ENCODE measurements at regions of chr2 and their contacts with region 1.

Region 1: DNA sequence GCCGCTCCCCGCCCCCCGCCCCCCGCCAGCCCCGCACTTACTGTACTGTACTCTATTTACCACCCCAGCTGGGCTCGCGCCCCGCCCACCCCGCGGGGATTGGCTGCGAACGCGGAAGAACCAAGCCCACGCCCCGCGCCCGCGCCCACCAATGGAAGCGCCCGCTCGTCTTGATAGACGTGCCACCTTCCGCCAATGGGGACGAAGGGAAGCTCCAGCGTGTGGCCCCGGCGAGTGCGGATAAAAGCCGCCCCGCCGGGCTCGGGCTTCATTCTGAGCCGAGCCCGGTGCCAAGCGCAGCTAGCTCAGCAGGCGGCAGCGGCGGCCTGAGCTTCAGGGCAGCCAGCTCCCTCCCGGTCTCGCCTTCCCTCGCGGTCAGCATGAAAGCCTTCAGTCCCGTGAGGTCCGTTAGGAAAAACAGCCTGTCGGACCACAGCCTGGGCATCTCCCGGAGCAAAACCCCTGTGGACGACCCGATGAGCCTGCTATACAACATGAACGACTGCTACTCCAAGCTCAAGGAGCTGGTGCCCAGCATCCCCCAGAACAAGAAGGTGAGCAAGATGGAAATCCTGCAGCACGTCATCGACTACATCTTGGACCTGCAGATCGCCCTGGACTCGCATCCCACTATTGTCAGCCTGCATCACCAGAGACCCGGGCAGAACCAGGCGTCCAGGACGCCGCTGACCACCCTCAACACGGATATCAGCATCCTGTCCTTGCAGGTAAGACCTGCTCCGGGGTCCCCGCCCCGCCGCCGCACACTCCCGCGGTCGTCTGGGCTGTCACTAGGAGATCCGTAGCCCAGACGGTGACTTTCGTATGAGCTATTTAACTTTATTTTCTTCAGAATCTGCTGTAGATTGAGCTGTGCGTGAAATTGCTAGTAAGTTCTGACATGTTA is at the start of gene ID2:
- DNase-seq: peak; percentile 99
- H3K4me3 Mint-ChIP-seq: peak within 1 kb of the TSS; percentile 98
- H3K27ac Mint-ChIP-seq: peak within 1 kb of the TSS; percentile 99
- H3K4me1 Mint-ChIP-seq: peaks cover 33% of the 10 kb centered on the region
- H3K27me3 Mint-ChIP-seq: no peaks in the 10 kb centered on the region
- CTCF ChIP-seq: no peak
- total RNA-seq, gene ID2: 77.8 and 92.5 TPM in 2 replicates

Region 2: GRCh38 chr2:7203055-7203467 is 1479.0 kb before region 1 on chr2:
- CTCF ChIA-PET with region 1: no interaction called
- intact Hi-C with region 1: loop called (anchors 5 kb)
- DNase-seq: peak; percentile 61
- H3K4me3 Mint-ChIP-seq: no peak overlapping the region
- H3K27ac Mint-ChIP-seq: no peak overlapping the region
- H3K4me1 Mint-ChIP-seq: no peaks in the 10 kb centered on the region
- H3K27me3 Mint-ChIP-seq: peaks cover 10% of the 10 kb centered on the region
- CTCF ChIP-seq: peak; percentile 58

Region 3: DNA sequence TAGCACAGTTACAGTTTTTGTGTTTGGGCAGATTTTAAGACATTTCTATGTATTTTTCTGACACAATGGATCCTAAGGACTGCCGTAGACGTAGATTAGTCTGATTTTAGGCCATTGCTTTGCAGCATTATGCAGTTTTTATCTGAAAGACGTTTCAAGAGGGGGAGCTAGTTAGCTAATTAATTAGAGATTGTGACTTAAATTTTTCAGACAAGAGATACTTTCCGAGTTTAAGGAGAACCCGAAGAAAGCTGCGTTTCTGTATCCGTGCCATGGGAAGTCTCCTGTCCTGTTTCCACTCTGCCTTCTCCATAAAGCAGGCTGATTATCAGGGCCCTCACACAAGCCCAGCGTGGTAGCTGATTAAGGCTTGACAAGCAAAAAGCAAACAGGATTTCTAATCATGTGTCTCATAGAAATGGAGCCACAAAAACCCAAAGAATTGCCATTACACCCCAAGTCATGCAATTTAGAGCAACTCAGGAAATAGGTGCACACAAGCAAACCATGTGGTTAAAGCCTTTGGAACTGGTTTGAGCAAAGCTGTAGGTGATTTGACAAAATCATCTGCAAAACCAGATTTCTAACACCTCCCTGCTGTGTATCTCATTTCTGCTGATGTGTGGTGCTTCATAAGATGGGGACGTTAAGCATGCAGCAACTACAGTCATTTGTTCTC is 956.7 kb before region 1 on chr2:
- CTCF ChIA-PET with region 1: no interaction called
- intact Hi-C with region 1: loop called (anchors 5 kb)
- DNase-seq: no peak
- H3K4me3 Mint-ChIP-seq: no peak overlapping the region
- H3K27ac Mint-ChIP-seq: peak overlapping the region; percentile 1
- H3K4me1 Mint-ChIP-seq: peaks cover 13% of the 10 kb centered on the region
- H3K27me3 Mint-ChIP-seq: no peaks in the 10 kb centered on the region
- CTCF ChIP-seq: no peak

Region 4: GRCh38 chr2:8103083-8103708 is 578.8 kb before region 1 on chr2:
- CTCF ChIA-PET with region 1: no interaction called
- intact Hi-C with region 1: loop called (anchors 2 kb)
- DNase-seq: peak; percentile 31
- H3K4me3 Mint-ChIP-seq: no peak overlapping the region
- H3K27ac Mint-ChIP-seq: no peak overlapping the region
- H3K4me1 Mint-ChIP-seq: peaks cover 50% of the 10 kb centered on the region
- H3K27me3 Mint-ChIP-seq: no peaks in the 10 kb centered on the region
- CTCF ChIP-seq: no peak

Region 5: DNA sequence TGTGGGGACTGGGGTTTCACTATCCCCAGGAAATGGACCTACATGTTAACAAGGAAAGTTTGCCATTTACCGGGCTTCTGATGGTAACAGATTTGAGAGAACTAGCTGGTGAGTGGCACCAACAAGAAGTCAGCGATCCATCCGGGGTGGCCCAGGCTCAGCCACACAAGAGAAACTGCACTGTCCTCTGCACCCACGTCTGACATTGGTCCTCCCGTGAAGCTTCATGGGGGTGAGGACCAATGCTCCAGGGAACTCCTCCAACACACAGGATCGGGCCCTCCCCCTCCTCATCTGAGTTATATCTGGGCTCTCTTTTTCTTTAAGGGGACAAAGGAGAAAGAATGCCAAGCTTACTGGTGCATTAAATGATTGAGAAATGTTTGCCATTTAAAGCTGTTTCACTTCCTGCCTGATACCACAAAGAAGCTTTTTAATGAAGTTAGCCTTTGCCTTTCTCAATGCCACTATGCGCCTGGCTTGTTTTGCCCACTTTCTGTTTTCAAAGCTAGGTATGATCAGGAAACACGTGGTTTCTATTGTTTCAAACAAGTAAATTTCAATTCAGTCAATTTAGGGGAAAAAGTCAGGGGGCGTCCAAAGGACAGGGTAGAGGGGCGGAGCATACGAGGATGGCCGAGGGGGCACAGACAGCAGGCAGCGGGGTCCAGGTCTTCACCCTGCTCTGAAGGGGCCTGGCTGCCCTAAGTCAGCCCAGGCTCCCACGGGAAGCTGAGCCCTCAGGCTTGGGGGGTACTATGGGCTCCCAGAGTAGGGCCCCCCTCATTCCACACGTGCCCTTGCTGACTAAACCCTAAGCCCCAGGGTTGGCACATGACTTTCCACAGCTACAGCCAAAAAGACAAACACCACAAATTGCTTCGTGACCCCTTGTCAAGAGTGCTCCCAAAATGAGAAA is 204.2 kb before region 1 on chr2:
- CTCF ChIA-PET with region 1: no interaction called
- intact Hi-C with region 1: loop called (anchors 5 kb)
- DNase-seq: no peak
- H3K4me3 Mint-ChIP-seq: no peak overlapping the region
- H3K27ac Mint-ChIP-seq: peak overlapping the region; percentile 86
- H3K4me1 Mint-ChIP-seq: peaks cover 77% of the 10 kb centered on the region
- H3K27me3 Mint-ChIP-seq: no peaks in the 10 kb centered on the region
- CTCF ChIP-seq: no peak

Region 6: GRCh38 chr2:8525582-8526402 is 156.2 kb before region 1 on chr2:
- CTCF ChIA-PET with region 1: interaction called, 10 read pairs
- intact Hi-C with region 1: loop called (anchors 1 kb)
- DNase-seq: peak; percentile 93
- H3K4me3 Mint-ChIP-seq: peak overlapping the region; percentile 53
- H3K27ac Mint-ChIP-seq: peak overlapping the region; percentile 72
- H3K4me1 Mint-ChIP-seq: peaks cover 54% of the 10 kb centered on the region
- H3K27me3 Mint-ChIP-seq: no peaks in the 10 kb centered on the region
- CTCF ChIP-seq: peak; percentile 32

Region 7: GRCh38 chr2:8615576-8616281 is 66.3 kb before region 1 on chr2:
- CTCF ChIA-PET with region 1: no interaction called
- intact Hi-C with region 1: no loop called
- DNase-seq: no peak
- H3K4me3 Mint-ChIP-seq: no peak overlapping the region
- H3K27ac Mint-ChIP-seq: no peak overlapping the region
- H3K4me1 Mint-ChIP-seq: no peaks in the 10 kb centered on the region
- H3K27me3 Mint-ChIP-seq: no peaks in the 10 kb centered on the region
- CTCF ChIP-seq: no peak

Region 8: GRCh38 chr2:8628230-8629209 is 53.5 kb before region 1 on chr2:
- CTCF ChIA-PET with region 1: interaction called, 11 read pairs
- intact Hi-C with region 1: loop called (anchors 2 kb)
- DNase-seq: peak; percentile 68
- H3K4me3 Mint-ChIP-seq: peak overlapping the region; percentile 52
- H3K27ac Mint-ChIP-seq: peak overlapping the region; percentile 60
- H3K4me1 Mint-ChIP-seq: peaks cover 56% of the 10 kb centered on the region
- H3K27me3 Mint-ChIP-seq: no peaks in the 10 kb centered on the region
- CTCF ChIP-seq: peak; percentile 48